IMR-90 (cell line): ENCODE measurements at regions of chr3 and their contacts with region 1.

Region 1: GRCh38 chr3:187738331-187739093 is 6.8 kb downstream of the BCL6 start:
- DNase-seq: peak; percentile 93
- ATAC-seq: peak; percentile 63
- H3K4me3 ChIP-seq: peak overlapping the region; percentile 46
- H3K27ac ChIP-seq: peak overlapping the region; percentile 87
- H3K4me1 ChIP-seq: peaks cover 20% of the 10 kb centered on the region
- H3K27me3 ChIP-seq: no peaks in the 10 kb centered on the region
- CTCF ChIP-seq: peak; percentile 77
- POLR2A ChIP-seq: peak; percentile 48; the same call in 1 of the 2 replicates
- RAD21 ChIP-seq: peak; percentile 91

Region 2: GRCh38 chr3:187725653-187726370 is 12.7 kb before region 1 on chr3:
- CTCF ChIA-PET with region 1: no interaction called
- POLR2A ChIA-PET with region 1: interaction called, 16 read pairs
- dilution Hi-C with region 1: no loop called
- in situ Hi-C with region 1: no loop called
- intact Hi-C with region 1: no loop called
- DNase-seq: no peak
- ATAC-seq: no peak
- H3K4me3 ChIP-seq: no peak overlapping the region
- H3K27ac ChIP-seq: no peak overlapping the region
- H3K4me1 ChIP-seq: no peaks in the 10 kb centered on the region
- H3K27me3 ChIP-seq: no peaks in the 10 kb centered on the region
- CTCF ChIP-seq: no peak
- POLR2A ChIP-seq: no peak
- RAD21 ChIP-seq: no peak

Region 3: DNA sequence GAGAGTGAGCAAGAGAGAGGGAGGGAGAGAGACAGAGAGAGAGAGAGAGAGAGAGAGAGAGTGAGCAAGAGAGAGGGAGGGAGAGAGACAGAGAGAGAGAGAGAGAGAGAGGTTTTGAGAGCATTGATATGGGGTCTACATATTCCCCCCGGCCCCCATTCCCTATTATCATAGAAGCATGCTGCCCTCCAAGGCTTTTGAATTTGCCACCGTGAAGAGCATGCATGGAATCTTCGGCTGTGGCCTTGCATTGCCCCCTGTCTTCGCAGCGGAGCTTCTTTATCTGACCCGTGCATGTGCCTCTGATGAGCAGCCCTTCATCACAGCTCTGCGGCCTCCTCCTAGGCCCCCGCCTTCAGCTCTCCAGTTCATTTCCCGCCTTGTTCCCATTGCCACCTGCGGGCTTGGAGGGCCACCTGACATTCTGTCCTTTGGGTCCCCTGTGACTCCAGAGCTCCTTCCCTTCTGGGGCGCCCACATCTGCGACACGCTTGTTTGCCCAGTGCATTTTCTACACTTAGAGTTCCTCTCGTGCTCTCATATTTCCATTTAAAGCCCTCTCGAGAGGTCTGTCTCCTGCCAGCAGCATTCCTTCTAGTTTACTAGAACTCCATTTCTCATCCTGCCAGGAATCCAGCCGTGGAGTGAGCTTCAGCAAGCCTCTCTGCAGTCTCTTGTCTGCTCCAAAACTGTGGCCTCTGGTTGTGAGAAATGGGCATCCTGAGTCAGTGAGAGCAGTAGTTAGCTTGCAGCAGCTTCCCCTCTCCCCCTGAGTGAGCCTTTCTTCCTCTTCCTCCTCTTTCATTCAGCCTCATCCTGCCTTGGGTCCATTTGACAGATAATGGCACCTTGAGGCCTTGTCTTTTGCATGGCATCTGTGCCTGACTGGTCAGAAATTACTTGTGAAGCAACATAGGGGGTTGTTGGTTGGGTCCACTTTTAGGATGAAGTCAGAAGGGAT is 440.8 kb after region 1 on chr3:
- CTCF ChIA-PET with region 1: no interaction called
- POLR2A ChIA-PET with region 1: no interaction called
- dilution Hi-C with region 1: no loop called
- in situ Hi-C with region 1: loop called (anchors 10 kb)
- intact Hi-C with region 1: loop called (anchors 2 kb)
- DNase-seq: peak; percentile 92
- ATAC-seq: peak; percentile 90
- H3K4me3 ChIP-seq: no peak overlapping the region
- H3K27ac ChIP-seq: peak overlapping the region; percentile 86
- H3K4me1 ChIP-seq: peaks cover 21% of the 10 kb centered on the region
- H3K27me3 ChIP-seq: no peaks in the 10 kb centered on the region
- CTCF ChIP-seq: peak; percentile 31
- POLR2A ChIP-seq: no peak
- RAD21 ChIP-seq: peak; percentile 31

Region 4: GRCh38 chr3:188594139-188594538 is 855.6 kb after region 1 on chr3:
- CTCF ChIA-PET with region 1: no interaction called
- POLR2A ChIA-PET with region 1: interaction called, 3 read pairs
- dilution Hi-C with region 1: no loop called
- in situ Hi-C with region 1: no loop called
- intact Hi-C with region 1: loop called (anchors 5 kb)
- DNase-seq: peak; percentile 95
- ATAC-seq: peak; percentile 89
- H3K4me3 ChIP-seq: no peak overlapping the region
- H3K27ac ChIP-seq: peak overlapping the region; percentile 45
- H3K4me1 ChIP-seq: peaks cover 9% of the 10 kb centered on the region
- H3K27me3 ChIP-seq: no peaks in the 10 kb centered on the region
- CTCF ChIP-seq: no peak
- POLR2A ChIP-seq: no peak
- RAD21 ChIP-seq: no peak

Region 5: DNA sequence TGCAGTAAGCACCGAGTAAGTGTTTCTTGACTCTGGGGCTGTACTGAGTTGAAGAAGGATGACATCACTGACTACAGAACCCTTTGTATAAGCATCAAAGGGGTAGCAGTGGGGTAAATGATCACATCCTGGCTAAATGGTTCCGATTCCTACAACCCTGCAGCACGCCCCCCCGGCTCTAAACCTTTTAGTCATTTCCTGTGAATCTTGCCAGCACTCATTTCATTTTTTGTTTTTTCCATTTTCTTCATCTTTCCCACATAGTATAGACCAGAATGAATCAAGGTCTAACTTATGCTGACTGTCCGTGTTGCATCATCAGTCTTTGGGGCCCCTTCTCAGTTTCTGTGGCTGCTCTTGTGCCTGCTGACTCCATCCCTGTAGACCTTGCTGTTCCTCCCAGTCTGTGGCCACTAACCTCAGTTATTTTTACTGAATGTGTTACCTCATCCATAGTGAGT is 1050.1 kb after region 1 on chr3:
- CTCF ChIA-PET with region 1: interaction called, 3 read pairs
- POLR2A ChIA-PET with region 1: no interaction called
- dilution Hi-C with region 1: no loop called
- in situ Hi-C with region 1: no loop called
- intact Hi-C with region 1: loop called (anchors 5 kb)
- DNase-seq: peak; percentile 97
- ATAC-seq: peak; percentile 96
- H3K4me3 ChIP-seq: no peak overlapping the region
- H3K27ac ChIP-seq: peak overlapping the region; percentile 30; the same call in 1 of the 2 replicates
- H3K4me1 ChIP-seq: peaks cover 11% of the 10 kb centered on the region
- H3K27me3 ChIP-seq: no peaks in the 10 kb centered on the region
- CTCF ChIP-seq: no peak
- POLR2A ChIP-seq: no peak
- RAD21 ChIP-seq: no peak

Region 6: DNA sequence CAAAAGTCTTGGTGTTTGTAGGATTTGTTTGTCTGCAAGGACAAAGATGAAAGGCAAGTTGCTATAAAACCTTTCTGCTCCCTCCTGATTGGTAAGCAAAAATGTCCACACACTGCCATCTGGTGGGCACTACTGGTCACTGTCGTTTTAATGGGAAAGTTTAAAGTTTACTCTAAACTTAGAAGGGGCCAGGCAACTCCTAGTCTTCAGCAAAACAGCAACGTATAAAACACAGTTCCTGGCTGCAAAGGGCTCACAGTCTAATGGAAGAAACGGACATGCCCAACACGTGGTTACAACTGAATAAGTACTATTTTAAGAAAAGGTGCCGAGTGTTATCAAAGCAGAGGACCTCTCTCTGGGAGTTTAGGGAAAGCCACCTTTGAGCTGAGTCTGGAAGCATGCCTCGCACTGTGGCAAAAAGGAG is 1409.6 kb after region 1 on chr3:
- CTCF ChIA-PET with region 1: interaction called, 4 read pairs
- POLR2A ChIA-PET with region 1: no interaction called
- dilution Hi-C with region 1: no loop called
- in situ Hi-C with region 1: loop called (anchors 10 kb)
- intact Hi-C with region 1: loop called (anchors 1 kb)
- DNase-seq: peak; percentile 67
- ATAC-seq: peak; percentile 91
- H3K4me3 ChIP-seq: no peak overlapping the region
- H3K27ac ChIP-seq: no peak overlapping the region
- H3K4me1 ChIP-seq: 0 out of 2 replicates have a peak, but pooled peaks cover 3% of the 10 kb centered on the region
- H3K27me3 ChIP-seq: peaks cover 9% of the 10 kb centered on the region
- CTCF ChIP-seq: peak; percentile 81
- POLR2A ChIP-seq: no peak
- RAD21 ChIP-seq: peak; percentile 79